Activated B cell treated with CpG ODN at 0.5 μM for 24 hours (primary cell): ENCODE measurements at regions of chr10 and their contacts with region 1.

Region 1: DNA sequence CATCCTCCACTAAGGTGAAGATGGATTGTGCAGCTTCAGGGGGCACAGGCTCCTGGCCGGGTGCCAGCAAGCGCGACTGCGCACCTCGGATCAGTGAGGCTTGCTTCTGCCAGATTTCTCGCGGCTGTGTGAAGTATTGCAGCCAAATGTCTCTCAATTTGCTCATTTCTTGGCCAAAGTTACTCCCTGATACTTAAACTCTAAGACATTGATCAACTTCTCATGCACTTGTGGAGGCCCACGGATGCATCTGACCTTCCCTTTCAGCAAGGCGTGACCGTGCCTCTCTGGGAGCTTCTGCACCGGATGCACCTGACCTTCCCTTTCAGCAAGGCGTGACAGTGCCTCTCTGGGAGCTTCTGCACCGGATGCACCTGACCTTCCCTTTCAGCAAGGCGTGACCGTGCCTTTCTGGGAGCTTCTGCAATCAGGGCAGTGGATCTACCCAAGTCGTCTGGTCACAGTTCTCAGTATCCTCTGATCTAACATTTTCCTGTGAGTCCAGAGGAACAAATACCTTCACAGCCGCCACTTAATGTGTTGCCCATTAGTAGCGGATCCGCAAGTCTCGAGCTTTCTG is 248.3 kb downstream of the ADARB2 start:
- DNase-seq: peak; percentile 52
- ATAC-seq: peak; percentile 90
- H3K4me3 Mint-ChIP-seq: peak overlapping the region; percentile 56
- H3K27ac Mint-ChIP-seq: peak overlapping the region; percentile 85
- H3K4me1 Mint-ChIP-seq: peaks cover 62% of the 10 kb centered on the region
- H3K27me3 Mint-ChIP-seq: no peaks in the 10 kb centered on the region
- CTCF ChIP-seq: no peak

Region 2: DNA sequence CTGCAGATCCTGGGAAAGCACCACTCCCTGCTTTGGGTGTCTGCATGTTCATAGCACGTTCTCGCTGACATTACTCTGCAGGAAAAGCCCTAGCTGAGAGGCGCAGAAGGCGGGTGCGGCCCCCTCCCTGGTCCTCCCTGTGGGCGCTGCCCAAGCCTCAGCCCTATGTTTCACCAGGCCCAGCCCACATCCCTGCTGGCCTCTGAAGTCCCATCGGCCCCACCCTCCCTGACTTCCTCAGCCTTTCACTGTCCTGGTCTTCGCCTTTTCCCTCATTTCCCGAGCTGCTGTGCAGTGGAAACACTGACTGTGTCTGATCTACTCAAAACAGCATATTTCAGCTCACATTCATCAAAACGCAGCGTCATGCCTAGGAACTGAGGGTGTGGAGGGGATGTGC is 763.3 kb before region 1 on chr10:
- CTCF ChIA-PET with region 1: no interaction called
- POLR2A ChIA-PET with region 1: no interaction called
- intact Hi-C with region 1: no loop called
- DNase-seq: no peak
- ATAC-seq: no peak
- H3K4me3 Mint-ChIP-seq: no peak overlapping the region
- H3K27ac Mint-ChIP-seq: no peak overlapping the region
- H3K4me1 Mint-ChIP-seq: no peaks in the 10 kb centered on the region
- H3K27me3 Mint-ChIP-seq: no peaks in the 10 kb centered on the region
- CTCF ChIP-seq: no peak

Region 3: DNA sequence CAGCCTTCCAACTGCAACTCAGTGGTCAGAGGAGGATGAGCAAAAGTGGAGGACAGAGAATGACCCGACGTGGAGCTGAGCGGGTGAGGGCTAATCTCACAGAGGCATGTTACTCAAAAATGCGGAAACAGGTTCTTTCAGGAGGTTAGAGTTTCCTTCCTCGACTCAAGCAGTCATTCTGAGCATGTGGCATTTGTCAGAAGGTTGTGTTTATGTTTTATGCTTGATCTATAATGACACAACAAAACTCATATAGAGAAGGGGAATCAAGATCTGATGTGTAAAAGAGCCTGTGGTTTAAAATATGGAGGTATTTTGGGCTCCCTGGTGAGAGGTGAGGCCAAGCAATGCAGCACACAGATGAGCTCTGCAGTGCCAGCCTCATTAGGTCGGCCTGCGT is 63.2 kb before region 1 on chr10:
- CTCF ChIA-PET with region 1: interaction called, 3 read pairs
- POLR2A ChIA-PET with region 1: interaction called, 9 read pairs
- intact Hi-C with region 1: loop called (anchors 1 kb)
- DNase-seq: no peak
- ATAC-seq: peak; percentile 71
- H3K4me3 Mint-ChIP-seq: peak overlapping the region; percentile 42
- H3K27ac Mint-ChIP-seq: peak overlapping the region; percentile 77
- H3K4me1 Mint-ChIP-seq: peaks cover 65% of the 10 kb centered on the region
- H3K27me3 Mint-ChIP-seq: peaks cover 2% of the 10 kb centered on the region
- CTCF ChIP-seq: no peak

Region 4: DNA sequence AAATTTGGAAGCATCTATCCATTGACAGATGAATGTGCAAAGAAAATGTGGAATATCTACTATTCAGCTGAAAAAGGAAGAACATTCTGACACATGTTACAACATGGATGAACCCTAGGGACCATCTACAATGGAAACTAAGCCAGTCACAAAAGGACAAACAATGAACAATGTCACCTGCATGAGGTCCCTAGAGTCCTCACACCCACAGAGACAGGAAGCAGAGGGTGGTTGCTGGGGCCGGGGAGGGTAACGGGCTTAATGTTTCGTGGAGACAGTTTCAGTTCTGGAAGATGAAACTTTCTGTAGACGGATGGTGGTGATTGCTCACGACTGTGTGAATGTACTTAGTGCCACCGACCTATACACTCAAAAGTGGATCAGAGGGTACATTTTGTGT is 34.6 kb before region 1 on chr10:
- CTCF ChIA-PET with region 1: no interaction called
- POLR2A ChIA-PET with region 1: interaction called, 7 read pairs
- intact Hi-C with region 1: loop called (anchors 1 kb)
- DNase-seq: peak; percentile 46
- ATAC-seq: peak; percentile 96
- H3K4me3 Mint-ChIP-seq: peak overlapping the region; percentile 49
- H3K27ac Mint-ChIP-seq: peak overlapping the region; percentile 70
- H3K4me1 Mint-ChIP-seq: peaks cover 52% of the 10 kb centered on the region
- H3K27me3 Mint-ChIP-seq: no peaks in the 10 kb centered on the region
- CTCF ChIP-seq: no peak

Region 5: DNA sequence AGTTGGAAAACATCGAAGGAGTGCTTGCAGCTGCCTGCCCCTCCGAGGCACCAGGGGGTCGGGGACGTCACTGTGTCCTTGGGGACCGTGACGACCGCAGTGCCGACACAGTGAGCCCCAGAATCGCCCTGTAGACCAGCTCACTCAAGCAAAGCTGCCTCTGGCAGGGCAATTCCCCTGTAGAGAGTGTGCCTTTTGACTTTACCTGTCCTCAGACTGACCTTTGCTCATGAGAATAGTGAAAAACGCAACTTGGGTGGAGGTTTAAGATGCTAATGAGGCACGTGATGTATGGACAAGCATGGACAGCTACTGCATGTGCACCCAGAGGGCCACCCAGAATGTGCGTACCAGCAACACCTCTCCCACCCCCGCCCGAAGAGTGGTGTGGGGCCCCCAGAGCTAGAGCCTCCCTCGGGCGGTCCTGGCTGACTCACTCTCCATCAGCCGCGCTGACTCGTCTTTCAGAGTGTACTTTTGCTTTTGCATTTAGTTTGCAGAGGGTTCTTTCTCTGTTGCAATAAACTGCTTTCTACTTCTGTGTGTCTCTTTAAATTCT is 23.6 kb before region 1 on chr10:
- CTCF ChIA-PET with region 1: interaction called, 5 read pairs
- POLR2A ChIA-PET with region 1: interaction called, 8 read pairs
- intact Hi-C with region 1: loop called (anchors 2 kb)
- DNase-seq: no peak
- ATAC-seq: peak; percentile 83
- H3K4me3 Mint-ChIP-seq: peak overlapping the region; percentile 62
- H3K27ac Mint-ChIP-seq: no peak overlapping the region
- H3K4me1 Mint-ChIP-seq: peaks cover 44% of the 10 kb centered on the region
- H3K27me3 Mint-ChIP-seq: peaks cover 2% of the 10 kb centered on the region
- CTCF ChIP-seq: no peak

Region 6: GRCh38 chr10:1576467-1577372 is 87.7 kb after region 1 on chr10:
- CTCF ChIA-PET with region 1: no interaction called
- POLR2A ChIA-PET with region 1: interaction called, 3 read pairs
- intact Hi-C with region 1: loop called (anchors 1 kb)
- DNase-seq: no peak
- ATAC-seq: peak; percentile 70
- H3K4me3 Mint-ChIP-seq: no peak overlapping the region
- H3K27ac Mint-ChIP-seq: no peak overlapping the region
- H3K4me1 Mint-ChIP-seq: peaks cover 71% of the 10 kb centered on the region
- H3K27me3 Mint-ChIP-seq: peaks cover 12% of the 10 kb centered on the region
- CTCF ChIP-seq: no peak

Region 7: GRCh38 chr10:1643161-1643907 is 154.3 kb after region 1 on chr10:
- CTCF ChIA-PET with region 1: no interaction called
- POLR2A ChIA-PET with region 1: no interaction called
- intact Hi-C with region 1: loop called (anchors 1 kb)
- DNase-seq: no peak
- ATAC-seq: peak; percentile 87
- H3K4me3 Mint-ChIP-seq: peak overlapping the region; percentile 17
- H3K27ac Mint-ChIP-seq: peak overlapping the region; percentile 14
- H3K4me1 Mint-ChIP-seq: peaks cover 10% of the 10 kb centered on the region
- H3K27me3 Mint-ChIP-seq: peaks cover 12% of the 10 kb centered on the region
- CTCF ChIP-seq: no peak

Region 8: DNA sequence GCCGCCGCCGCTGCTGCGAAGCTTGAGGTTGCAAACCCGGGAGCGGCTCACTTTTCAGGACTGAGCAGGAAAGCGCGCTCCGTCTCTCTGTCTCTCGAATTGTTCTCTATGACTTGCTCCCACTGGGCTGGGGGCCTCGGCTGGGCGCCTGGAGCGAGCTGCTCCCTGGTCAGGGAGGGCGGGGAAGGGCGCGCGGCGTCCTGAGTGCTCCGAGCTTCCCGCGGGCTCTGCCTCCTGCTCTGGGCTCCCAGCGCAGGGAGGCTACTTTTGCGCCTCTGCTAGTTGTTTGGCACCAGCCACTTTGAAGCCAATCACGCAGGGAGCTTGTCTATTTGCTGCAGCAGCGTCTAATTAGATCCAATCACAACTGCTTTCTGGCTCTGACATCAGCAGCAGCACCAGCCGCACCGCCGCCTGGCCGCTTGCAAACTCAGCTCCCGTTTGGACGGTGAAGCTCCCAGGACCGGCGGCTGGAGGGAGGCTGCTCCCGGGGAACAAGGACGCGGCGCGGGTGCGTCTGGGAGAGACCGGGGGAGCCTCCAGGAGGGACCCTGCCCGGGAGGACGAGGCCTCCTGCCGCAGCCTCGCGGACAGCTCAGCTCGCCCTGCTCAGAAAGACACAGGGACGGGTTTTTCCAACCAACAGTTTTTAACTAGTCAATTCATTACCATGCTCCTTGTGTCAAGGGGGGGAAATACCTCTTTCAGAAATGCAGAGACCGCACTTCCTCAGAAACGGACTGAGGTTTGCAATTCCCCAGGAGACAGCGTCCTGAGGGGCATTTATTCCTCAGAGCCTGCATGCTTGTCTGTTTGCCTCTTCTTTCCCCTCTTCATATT is 248.4 kb after region 1 on chr10 and contains the start of gene ADARB2:
- CTCF ChIA-PET with region 1: no interaction called
- POLR2A ChIA-PET with region 1: no interaction called
- intact Hi-C with region 1: loop called (anchors 5 kb)
- DNase-seq: peak; percentile 30
- ATAC-seq: peak; percentile 49
- H3K4me3 Mint-ChIP-seq: peak within 1 kb of the TSS; percentile 70
- H3K27ac Mint-ChIP-seq: no peak within 1 kb of the TSS
- H3K4me1 Mint-ChIP-seq: peaks cover 37% of the 10 kb centered on the region
- H3K27me3 Mint-ChIP-seq: peaks cover 66% of the 10 kb centered on the region
- CTCF ChIP-seq: no peak
- total RNA-seq, gene ADARB2: 0.10 and 0.11 TPM in 2 replicates